G401 (cell line): ENCODE measurements at regions of chr11 and their contacts with region 1.

Region 1: GRCh38 chr11:130861902-130862860 is 54.1 kb downstream of the SNX19 start:
- DNase-seq: peak; percentile 91

Region 2: DNA sequence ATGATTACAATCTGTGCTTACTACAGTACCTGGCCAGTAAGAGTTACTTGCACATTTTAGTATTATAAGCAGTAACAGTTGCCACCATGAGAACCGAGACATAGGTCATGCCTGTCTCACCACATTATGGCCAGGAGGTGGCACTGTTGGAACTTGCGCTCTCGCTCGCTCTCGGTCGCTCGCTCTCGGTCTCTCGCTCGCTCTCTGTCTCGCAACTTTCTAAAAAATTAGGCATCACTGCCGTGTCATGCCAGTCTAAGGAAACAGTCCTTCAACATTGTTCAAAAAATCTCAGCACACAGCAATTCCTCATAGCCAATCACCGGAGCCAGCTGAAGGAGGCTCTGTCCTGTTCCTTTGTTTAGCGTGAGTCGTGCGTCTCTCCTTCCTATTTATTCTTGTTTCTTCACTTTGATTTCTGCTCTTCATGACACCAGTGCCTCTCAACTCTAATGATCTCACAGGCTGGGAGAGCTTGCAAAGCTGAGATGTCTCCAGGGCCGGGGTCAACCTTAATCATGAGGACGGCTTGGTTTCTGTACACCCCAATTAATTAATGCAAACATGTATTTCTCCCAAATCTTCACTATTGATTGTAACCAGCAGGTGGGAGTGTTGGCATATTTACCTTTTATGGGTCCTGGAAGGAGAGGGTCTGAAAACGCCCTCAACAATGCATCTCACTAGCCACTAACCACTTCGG is 427.5 kb before region 1 on chr11:
- in situ Hi-C with region 1: loop called (anchors 25 kb)
- DNase-seq: peak; percentile 84

Region 3: GRCh38 chr11:130897262-130898182 is 35.3 kb after region 1 on chr11:
- in situ Hi-C with region 1: no loop called
- DNase-seq: no peak

Region 4: GRCh38 chr11:130937051-130937450 is 74.9 kb after region 1 on chr11:
- in situ Hi-C with region 1: no loop called
- DNase-seq: no peak

Region 5: DNA sequence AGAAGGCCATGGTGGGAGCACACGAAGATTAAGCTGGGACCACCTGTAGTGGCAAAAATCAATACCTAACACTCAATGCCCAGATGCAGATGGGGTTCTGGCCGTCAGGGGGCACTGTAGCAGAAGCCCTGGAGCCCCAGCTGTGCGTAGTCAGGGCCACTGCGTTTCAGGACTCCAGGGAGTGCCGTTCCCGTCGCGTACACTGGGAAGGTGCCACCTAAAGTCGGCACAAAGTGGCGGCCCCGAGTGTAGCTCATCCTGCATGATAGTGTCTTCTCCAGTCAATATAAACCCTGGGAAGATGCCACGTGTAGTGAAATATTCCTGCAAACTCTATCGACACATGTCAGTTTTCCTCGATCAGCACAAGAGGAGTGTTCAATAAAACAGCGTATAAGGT is 384.5 kb after region 1 on chr11:
- in situ Hi-C with region 1: no loop called
- DNase-seq: peak; percentile 11